ENCODE measurements at regions of chr3 and their contacts with region 1.

Region 1: DNA sequence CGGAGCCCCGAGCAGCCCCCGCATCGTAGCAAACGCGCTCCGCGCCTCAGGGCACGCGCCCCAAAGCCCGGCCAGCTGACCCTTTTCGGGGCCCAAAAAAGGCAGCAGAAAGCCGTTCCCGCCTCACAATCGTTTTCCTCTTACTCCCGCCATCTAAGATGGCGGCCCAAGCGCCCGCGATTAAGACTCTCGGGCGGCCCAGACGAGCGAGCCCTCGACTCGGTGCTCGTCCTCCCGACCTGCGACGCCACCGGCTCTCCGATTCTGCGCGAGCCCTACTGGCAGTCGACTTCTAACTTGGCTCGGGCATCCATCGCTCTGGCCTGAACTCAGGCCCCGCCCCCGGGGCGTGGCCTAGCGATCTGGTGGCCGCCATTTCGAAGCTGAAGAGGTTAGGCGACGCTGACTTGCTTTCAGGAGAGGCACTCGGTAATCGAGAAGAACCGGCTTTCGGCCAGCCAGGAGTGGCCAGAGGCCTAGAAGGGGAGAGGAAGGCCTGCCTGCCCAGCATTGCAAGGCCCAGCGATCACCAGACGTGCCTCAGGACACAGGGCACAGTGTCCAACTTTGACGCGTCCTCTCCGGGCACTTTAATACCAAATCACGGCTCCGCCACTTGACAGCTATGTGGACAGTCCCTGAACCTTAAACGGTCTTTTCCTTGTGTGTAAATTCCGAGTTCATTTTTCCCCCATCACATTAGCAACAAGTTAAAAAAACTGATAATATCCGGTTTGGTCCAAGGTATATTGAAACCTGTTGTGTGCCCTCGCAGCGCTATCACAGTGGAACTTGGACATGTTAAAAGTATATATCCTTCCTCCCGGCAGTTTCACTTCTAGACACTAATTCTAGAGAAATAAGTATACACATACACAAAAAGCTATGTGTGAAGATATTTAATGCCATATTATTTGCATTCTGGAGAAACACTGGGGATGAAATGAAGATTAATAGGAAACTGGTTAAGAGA is at the start of gene RAF1:
- DNase-seq: peak; percentile 95 to 99 (median 97)
- ATAC-seq: peak; percentile 87 to 90
- H3K4me3 Mint-ChIP-seq: peak within 1 kb of the TSS; percentile 81 to 100 (median 98)
- H3K27ac Mint-ChIP-seq: peak within 1 kb of the TSS; percentile 98 to 100 (median 99)
- H3K4me1 Mint-ChIP-seq: peaks cover 24 to 40% (median 34%) of the 10 kb centered on the region in 4 donors
- H3K27me3 Mint-ChIP-seq: no peaks in the 10 kb centered on the region
- polyA plus RNA-seq, gene RAF1: 49.4 to 75.1 (median 54.2) TPM

Region 2: DNA sequence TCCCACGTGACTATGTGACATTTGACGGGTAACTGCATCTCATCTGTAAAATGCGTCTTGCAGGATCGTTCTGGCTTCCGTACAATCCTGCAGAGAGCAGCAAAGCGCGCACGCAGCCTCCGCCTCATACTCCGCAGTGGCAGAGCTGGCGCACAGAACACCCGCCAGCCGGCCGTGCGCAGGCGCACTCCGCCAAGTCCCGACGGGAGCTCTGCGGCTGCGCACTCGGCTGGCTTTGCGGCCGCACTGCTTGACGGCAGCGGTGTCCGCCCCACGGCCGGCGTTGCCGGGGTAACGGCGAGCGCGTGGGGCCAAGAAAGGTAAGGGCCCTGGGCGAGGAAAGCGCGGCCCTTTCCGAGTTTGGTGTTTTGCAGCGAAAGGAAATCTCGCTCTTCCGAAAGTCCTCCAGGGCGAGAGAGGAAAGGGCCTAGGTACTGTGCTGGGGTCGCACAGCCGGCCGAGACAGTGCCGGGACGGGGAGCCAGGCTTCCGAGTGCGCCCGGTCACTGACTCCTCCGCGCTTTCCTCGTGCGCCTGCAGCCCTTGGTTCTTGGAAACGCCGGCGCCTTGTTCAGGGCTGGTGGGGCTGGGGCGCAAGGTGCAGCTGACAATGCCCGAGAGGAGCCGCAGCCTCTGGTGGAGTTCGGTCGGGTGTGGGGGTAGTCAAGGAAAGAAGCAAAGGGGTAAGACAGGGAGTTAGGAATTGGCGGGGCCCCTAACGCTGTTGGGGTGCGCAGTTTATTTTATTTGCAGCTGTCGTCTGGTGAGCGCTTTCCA is 179.8 kb before region 1 on chr3 and contains the start of gene TSEN2:
- POLR2A ChIA-PET with region 1: interaction called, 16 read pairs
- DNase-seq: peak; percentile 93 to 99 (median 97)
- ATAC-seq: peak; percentile 96
- H3K4me3 Mint-ChIP-seq: peak within 1 kb of the TSS; percentile 92 to 99 (median 94)
- H3K27ac Mint-ChIP-seq: peak within 1 kb of the TSS; percentile 94 to 99 (median 98)
- H3K4me1 Mint-ChIP-seq: peaks cover 25 to 54% (median 41%) of the 10 kb centered on the region in 4 donors
- H3K27me3 Mint-ChIP-seq: no peaks in the 10 kb centered on the region
- polyA plus RNA-seq, gene TSEN2: 11.9 to 21.0 (median 11.9) TPM